ENCODE measurements at regions of chr12 and their contacts with region 1.

Region 1: GRCh38 chr12:57151741-57152630 is 4.6 kb upstream of the LRP1-AS start:
- DNase-seq: no peak
- ATAC-seq: no peak
- H3K4me3 ChIP-seq: no peak overlapping the region
- H3K27ac ChIP-seq: no peak overlapping the region
- H3K4me1 ChIP-seq: peaks cover 87% of the 10 kb centered on the region
- H3K27me3 ChIP-seq: no peaks in the 10 kb centered on the region
- CTCF ChIP-seq: no peak
- EP300 ChIP-seq: no peak
- POLR2A ChIP-seq: 0 out of 4 replicates have a peak, but pooled peaks of 1 of the 2 experiments have one; percentile 18
- RAD21 ChIP-seq: no peak

Region 2: GRCh38 chr12:56816491-56816890 is 335.5 kb before region 1 on chr12:
- CTCF ChIA-PET with region 1: no interaction called
- POLR2A ChIA-PET with region 1: no interaction called
- in situ Hi-C with region 1: no loop called
- intact Hi-C with region 1: no loop called
- DNase-seq: no peak
- ATAC-seq: no peak
- H3K4me3 ChIP-seq: no peak overlapping the region
- H3K27ac ChIP-seq: no peak overlapping the region
- H3K4me1 ChIP-seq: no peaks in the 10 kb centered on the region
- H3K27me3 ChIP-seq: peaks cover 0 to 3% of the 10 kb centered on the region in 2 experiments; a peak in 1 of 5 replicates
- CTCF ChIP-seq: no peak
- EP300 ChIP-seq: no peak
- POLR2A ChIP-seq: no peak
- RAD21 ChIP-seq: no peak

Region 3: DNA sequence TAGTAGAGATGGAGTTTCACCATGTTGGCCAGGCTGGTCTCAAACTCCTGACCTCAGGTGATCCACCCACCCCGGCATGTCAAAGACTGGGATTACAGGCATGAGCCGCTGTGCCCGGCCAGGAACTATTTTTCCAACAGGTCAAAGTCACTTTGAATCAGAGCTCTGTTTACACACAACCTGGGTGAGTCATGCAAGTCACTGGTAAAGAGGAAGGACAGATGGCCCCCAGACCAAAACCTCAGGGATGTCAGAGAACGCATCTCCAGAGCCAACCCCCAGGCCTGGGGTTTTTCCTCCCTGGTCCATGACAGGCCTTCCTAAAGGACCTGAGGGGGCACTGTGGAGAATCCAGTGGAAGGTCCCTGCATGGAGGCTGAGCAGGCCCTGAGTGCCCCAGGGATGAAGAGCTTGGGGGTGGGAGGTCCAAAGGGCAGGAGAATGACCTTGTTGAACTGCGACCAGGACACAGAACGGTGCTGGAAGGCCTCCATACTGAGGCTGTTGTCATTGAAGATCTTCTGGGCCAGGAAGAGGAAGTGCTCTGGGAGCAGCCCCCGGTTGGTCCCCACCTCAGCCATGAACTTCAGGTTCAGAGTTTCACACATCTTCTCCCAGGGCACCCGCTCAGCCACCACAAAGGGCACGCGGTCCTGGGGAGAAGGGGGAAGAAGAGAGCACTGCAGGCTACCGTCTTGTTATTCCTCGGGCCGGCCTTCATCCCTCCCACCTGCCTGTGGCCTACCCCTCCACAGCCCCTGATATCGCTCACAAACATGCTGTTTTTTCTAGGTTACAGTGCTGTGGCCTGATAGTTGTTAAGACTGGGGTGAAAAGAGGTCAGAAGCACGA is 49.9 kb before region 1 on chr12:
- CTCF ChIA-PET with region 1: no interaction called
- POLR2A ChIA-PET with region 1: interaction called, 22 read pairs
- in situ Hi-C with region 1: no loop called
- intact Hi-C with region 1: no loop called
- DNase-seq: peak; percentile 99
- ATAC-seq: peak; percentile 88
- H3K4me3 ChIP-seq: peak overlapping the region; percentile 19 to 65 (median 34); a peak in 5 of 6 replicates
- H3K27ac ChIP-seq: peak overlapping the region; percentile 99
- H3K4me1 ChIP-seq: peaks cover 44% of the 10 kb centered on the region
- H3K27me3 ChIP-seq: no peaks in the 10 kb centered on the region
- CTCF ChIP-seq: peak; percentile 58
- EP300 ChIP-seq: peak; percentile 52 to 72; a peak in 3 of 4 replicates
- POLR2A ChIP-seq: peak; percentile 53 to 71; a peak in 3 of 4 replicates
- RAD21 ChIP-seq: no peak

Region 4: DNA sequence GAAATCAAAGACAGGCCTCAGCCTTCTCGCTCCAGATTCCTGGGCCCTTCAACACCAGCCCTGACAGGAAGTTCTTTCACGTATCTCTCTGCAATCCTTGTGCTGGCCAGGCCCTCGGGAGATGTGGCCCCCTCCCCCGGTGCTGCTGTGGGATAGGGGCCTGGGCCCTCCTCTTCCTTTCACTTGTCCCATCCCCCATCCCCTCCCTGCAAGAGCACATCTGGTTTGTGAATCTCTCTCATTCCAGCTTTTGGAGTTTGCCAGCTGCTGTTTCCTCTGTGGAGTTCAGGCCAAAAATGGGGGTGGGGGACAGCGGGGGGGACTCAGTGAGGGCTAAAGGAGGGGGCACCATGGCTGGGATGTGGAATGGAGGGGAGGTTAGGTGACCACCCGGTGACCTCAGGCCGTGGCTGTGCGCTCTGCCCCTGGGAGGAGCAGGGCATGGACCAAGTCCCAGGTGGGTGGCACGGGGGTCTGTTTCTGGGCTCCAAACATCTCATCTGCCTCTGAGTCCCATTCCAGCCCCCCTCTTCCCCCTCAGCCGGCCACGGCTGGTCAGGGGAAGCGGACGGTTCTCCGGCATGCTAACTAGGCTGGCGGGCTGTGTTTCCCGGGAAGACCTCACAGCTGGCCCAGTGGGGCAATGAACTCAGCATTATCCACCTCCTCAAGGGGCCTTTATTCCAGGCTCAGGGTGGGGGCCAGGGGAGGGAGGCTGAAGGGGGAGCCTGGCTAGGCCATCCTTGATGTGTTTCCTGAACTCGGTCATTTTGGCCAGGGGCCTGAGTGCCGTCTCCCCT is 16.3 kb before region 1 on chr12:
- CTCF ChIA-PET with region 1: no interaction called
- POLR2A ChIA-PET with region 1: interaction called, 827 read pairs
- in situ Hi-C with region 1: no loop called
- intact Hi-C with region 1: no loop called
- DNase-seq: no peak
- ATAC-seq: no peak
- H3K4me3 ChIP-seq: no peak overlapping the region
- H3K27ac ChIP-seq: peak overlapping the region; percentile 42
- H3K4me1 ChIP-seq: peaks cover 100% of the 10 kb centered on the region
- H3K27me3 ChIP-seq: no peaks in the 10 kb centered on the region
- CTCF ChIP-seq: no peak
- EP300 ChIP-seq: no peak
- POLR2A ChIP-seq: no peak
- RAD21 ChIP-seq: no peak

Region 5: DNA sequence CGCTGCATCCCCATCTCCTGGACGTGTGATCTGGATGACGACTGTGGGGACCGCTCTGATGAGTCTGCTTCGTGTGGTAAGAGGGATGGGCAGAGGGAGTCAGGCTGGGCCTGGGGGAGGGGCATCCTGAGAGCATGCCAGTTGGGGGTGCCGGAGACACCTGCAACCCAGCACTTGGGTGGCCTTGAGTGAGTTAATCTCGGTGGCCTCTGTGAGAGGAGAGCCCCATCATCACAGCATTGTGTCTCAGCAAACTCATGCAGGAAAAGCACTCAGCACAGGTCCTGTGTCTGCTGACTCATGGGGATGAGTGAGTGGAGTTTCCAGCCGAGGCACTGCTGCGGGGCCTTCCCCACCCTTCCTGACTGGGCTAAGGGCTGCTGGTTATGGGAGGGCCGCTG is 15.0 kb after region 1 on chr12:
- CTCF ChIA-PET with region 1: no interaction called
- POLR2A ChIA-PET with region 1: interaction called, 27 read pairs
- in situ Hi-C with region 1: no loop called
- intact Hi-C with region 1: no loop called
- DNase-seq: no peak
- ATAC-seq: no peak
- H3K4me3 ChIP-seq: no peak overlapping the region
- H3K27ac ChIP-seq: no peak overlapping the region
- H3K4me1 ChIP-seq: no peaks in the 10 kb centered on the region
- H3K27me3 ChIP-seq: no peaks in the 10 kb centered on the region
- CTCF ChIP-seq: no peak
- EP300 ChIP-seq: no peak
- POLR2A ChIP-seq: no peak
- RAD21 ChIP-seq: no peak

Region 6: GRCh38 chr12:57175428-57176138 is 23.6 kb after region 1 on chr12:
- CTCF ChIA-PET with region 1: no interaction called
- POLR2A ChIA-PET with region 1: interaction called, 27 read pairs
- in situ Hi-C with region 1: no loop called
- intact Hi-C with region 1: no loop called
- DNase-seq: peak; percentile 39
- ATAC-seq: peak; percentile 19
- H3K4me3 ChIP-seq: no peak overlapping the region
- H3K27ac ChIP-seq: no peak overlapping the region
- H3K4me1 ChIP-seq: 0 out of 2 replicates have a peak, but pooled peaks cover 5% of the 10 kb centered on the region
- H3K27me3 ChIP-seq: no peaks in the 10 kb centered on the region
- CTCF ChIP-seq: peak; percentile 83
- EP300 ChIP-seq: no peak
- POLR2A ChIP-seq: peak in 1 of 2 experiments; percentile 38; a peak in 1 of 4 replicates
- RAD21 ChIP-seq: peak; percentile 65

Region 7: DNA sequence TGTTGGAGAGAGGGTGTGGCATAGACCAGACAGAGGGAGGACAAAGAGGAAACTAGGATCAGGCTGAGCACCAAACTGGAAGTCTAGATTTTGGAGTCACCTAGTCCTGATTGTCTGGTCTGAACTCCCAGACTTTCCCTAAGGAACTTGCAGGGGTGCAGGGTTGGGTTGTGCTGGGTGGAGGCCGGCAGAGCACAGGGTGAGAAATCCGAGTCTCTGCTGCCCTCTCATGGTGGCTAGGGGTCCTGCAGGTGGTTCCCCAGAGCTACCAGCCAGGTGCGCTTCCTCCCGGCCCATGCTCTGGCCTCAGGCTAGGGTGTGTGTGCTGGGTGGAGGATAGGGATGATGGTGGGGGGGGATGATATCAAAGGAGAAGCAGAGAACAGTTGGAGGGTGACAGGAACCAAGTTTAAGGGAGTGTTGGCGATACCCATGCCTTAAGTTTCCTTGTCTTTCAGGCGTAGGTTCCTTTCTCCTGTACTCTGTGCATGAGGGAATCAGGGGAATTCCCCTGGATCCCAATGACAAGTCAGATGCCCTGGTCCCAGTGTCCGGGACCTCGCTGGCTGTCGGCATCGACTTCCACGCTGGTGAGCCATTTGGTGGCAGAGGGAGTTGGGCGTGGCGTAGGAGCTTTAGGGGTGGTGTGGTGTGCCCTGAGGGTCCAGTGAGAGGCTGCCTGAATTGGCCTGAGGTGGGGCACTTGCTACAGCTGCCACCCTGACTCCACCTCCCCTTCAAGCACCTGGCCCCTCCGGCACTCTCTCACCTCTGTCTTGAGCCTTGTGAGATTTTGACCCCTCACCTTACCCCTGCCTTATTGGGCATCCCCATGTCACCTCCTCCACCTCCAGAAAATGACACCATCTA is 31.2 kb after region 1 on chr12:
- CTCF ChIA-PET with region 1: no interaction called
- POLR2A ChIA-PET with region 1: interaction called, 10 read pairs
- in situ Hi-C with region 1: no loop called
- intact Hi-C with region 1: no loop called
- DNase-seq: peak; percentile 39
- ATAC-seq: peak; percentile 82
- H3K4me3 ChIP-seq: no peak overlapping the region
- H3K27ac ChIP-seq: no peak overlapping the region
- H3K4me1 ChIP-seq: no peaks in the 10 kb centered on the region
- H3K27me3 ChIP-seq: no peaks in the 10 kb centered on the region
- CTCF ChIP-seq: peak; percentile 95
- EP300 ChIP-seq: no peak
- POLR2A ChIP-seq: no peak
- RAD21 ChIP-seq: peak; percentile 90

Region 8: GRCh38 chr12:57213058-57213715 is 61.2 kb after region 1 on chr12:
- CTCF ChIA-PET with region 1: no interaction called
- POLR2A ChIA-PET with region 1: no interaction called
- in situ Hi-C with region 1: no loop called
- intact Hi-C with region 1: no loop called
- DNase-seq: peak; percentile 53
- ATAC-seq: peak; percentile 42
- H3K4me3 ChIP-seq: no peak overlapping the region
- H3K27ac ChIP-seq: no peak overlapping the region
- H3K4me1 ChIP-seq: peaks cover 37% of the 10 kb centered on the region
- H3K27me3 ChIP-seq: peaks cover 9 to 33% of the 10 kb centered on the region in 2 experiments
- CTCF ChIP-seq: peak; percentile 84
- EP300 ChIP-seq: no peak
- POLR2A ChIP-seq: no peak
- RAD21 ChIP-seq: peak; percentile 66

Region 9: DNA sequence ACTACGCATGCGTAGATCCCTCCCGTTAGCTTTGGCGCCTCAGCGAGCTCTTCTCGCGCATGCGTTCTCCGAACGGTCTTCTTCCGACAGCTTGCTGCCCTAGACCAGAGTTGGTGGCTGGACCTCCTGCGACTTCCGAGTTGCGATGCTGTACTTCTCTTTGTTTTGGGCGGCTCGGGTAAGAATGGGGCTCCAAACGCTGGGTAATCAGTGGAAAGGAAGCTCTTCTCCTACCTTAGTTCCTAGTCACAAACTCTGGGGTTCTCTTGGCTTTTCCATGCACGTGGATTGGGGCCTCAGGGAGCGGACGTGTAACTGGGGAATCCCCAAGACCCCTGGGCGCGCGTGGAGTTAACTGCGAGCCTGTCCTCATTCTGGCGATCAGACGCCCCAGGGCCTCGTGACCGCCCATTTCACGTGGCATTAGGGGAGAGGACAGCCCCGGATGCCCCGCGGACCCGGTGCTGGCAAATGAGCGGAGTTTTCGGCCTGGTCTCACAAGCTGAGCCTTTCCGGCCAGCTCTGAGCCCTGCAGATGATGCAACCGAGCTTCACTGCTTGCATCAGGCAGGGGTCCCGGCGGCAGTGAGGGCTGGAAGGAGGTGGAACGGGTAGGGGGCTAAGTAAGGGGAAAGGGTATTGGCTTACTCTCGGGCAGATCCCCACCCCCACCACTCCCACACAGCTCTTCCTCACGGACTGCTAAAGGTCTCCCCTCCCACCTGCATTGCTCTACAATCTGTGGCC is 77.8 kb after region 1 on chr12 and contains the start of gene SHMT2:
- CTCF ChIA-PET with region 1: no interaction called
- POLR2A ChIA-PET with region 1: interaction called, 10 read pairs
- in situ Hi-C with region 1: no loop called
- intact Hi-C with region 1: no loop called
- DNase-seq: peak; percentile 95
- ATAC-seq: peak; percentile 73
- H3K4me3 ChIP-seq: peak within 1 kb of the TSS; percentile 71 to 82 (median 75)
- H3K27ac ChIP-seq: peak within 1 kb of the TSS; percentile 95
- H3K4me1 ChIP-seq: peaks cover 81% of the 10 kb centered on the region
- H3K27me3 ChIP-seq: peaks cover 0 to 21% of the 10 kb centered on the region in 2 experiments; a peak in 4 of 5 replicates
- CTCF ChIP-seq: no peak; the same call in 1 of the 2 replicates
- EP300 ChIP-seq: no peak
- POLR2A ChIP-seq: peak in 1 of 2 experiments; percentile 68; a peak in 2 of 4 replicates
- RAD21 ChIP-seq: no peak
- total RNA-seq, gene SHMT2: 181 and 184 TPM in 2 replicates

Measured in HepG2 (cell line).